Posterior vena cava (tissue), 2 donors: ENCODE measurements at regions of chr1 and their contacts with region 1.

Region 1: GRCh38 chr1:84753516-84754385 is 63.5 kb upstream of the SSX2IP start:
- DNase-seq: peak; percentile 87

Region 2: GRCh38 chr1:83990749-83991148 is 763.0 kb before region 1 on chr1:
- intact Hi-C with region 1: loop called in 1 of 2 experiments (anchors 5 kb)
- DNase-seq: no peak

Region 3: DNA sequence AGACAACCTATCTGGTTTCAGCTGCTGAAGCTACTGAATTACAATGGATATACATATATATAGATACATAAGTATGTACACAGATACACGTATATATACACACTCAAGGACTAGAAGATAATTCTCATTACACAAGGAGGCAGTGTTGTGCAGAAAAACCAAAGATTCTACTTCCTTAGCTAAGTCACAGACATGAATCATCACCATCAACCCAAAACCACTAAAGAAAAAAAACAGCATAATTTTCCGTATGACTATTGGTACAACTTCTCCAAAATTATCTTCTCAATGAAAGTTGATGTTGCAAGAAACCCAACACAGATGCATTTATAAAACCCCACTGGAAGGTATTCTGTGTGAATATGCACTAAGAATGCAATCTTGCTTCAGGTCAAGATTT is 311.5 kb before region 1 on chr1:
- intact Hi-C with region 1: loop called in 1 of 2 experiments (anchors 10 kb)
- DNase-seq: no peak

Region 4: GRCh38 chr1:84524590-84524989 is 229.2 kb before region 1 on chr1:
- intact Hi-C with region 1: loop called in 1 of 2 experiments (anchors 5 kb)
- DNase-seq: no peak

Region 5: DNA sequence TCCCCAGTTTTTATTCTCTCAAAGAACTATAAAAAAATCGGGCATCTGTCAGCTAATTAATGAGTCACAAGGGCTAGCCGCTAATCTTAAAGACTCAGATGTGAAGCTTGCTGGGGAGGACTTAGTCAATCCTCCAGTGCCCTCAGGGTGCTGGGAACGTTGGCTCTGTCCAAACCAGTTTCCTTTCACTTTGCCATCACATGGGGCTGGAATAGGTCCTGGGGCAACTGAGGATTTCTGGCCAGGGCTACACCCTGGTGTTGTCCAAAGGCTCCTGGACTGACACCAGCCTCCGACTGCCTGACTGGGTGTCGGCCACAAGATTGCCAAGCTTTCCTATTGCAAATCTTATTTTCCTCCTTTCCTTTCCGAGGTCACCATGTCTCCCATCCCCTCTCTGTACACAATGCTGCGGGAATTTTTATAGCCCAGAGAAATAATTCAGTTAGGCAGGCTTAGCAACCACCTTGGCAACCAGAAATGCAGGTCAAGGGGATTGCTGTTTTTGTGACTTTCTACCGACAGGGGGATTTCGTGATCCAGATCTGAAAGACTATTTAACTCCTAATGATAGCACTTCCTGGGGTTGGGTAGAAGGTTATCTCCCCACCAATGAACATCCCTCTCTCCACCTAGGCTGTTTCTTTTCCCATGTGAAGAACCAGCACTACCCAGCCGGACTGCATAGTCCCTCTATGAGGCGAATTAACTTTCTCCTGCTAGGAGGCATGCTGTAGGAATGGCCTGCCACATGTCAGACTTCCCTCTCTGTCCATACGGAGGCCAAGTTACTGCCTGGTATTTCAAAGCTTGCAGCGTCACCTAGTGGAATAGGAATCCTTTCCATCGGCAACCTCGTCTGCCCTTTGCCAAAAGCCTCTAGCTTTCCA is 149.6 kb before region 1 on chr1:
- intact Hi-C with region 1: no loop called
- DNase-seq: peak; percentile 81